ENCODE measurements at regions of chr11 and their contacts with region 1.

Region 1: DNA sequence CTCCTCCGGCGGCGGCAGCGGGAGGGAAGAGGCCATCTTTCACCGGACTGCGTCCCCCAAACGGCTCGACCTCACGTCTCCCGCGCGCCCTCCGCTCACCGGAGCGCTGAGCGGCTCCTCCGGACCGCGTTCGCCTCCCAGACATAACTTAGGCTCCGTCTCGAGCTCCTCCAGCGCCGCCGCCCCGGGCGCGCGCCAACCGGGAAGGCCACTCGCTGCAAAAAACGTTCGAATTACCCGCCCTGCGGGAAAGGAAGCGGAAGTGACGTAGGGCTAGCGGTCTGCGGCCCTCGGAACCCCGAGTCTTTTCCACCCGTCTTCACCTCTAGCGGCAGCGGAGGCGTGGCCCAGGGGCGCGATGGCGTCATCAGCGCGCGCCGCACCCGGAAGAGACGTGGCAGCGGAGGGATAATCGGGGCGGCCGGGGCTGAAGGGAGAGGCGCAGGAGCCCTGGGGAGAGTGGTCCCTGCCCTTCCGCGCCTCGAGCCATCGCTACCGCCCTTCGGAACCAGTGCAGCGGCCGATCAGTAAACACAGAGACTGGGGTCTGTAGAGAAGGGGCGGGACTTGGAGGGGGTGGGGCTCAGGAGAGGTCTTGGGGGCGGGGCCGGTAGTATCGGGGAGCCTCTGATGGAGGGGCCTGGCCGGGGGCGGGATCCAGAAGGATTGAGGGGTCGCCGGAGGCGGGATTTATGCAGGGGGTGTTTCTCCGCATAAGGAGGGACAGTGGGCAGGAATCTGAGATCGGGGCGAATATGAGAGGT is at the starts of genes CDCA5 and ZFPL1:
- DNase-seq: peak; percentile 96
- H3K4me3 Mint-ChIP-seq: peak within 1 kb of the TSS; percentile 98
- H3K27ac Mint-ChIP-seq: peak within 1 kb of the TSS; percentile 97
- H3K4me1 Mint-ChIP-seq: peaks cover 59% of the 10 kb centered on the region
- H3K27me3 Mint-ChIP-seq: no peaks in the 10 kb centered on the region
- total RNA-seq, gene CDCA5: 91.8 and 92.5 TPM in 2 replicates
- total RNA-seq, gene ZFPL1: 31.9 and 34.5 TPM in 2 replicates

Region 2: GRCh38 chr11:64817476-64817875 is 266.5 kb before region 1 on chr11:
- intact Hi-C with region 1: no loop called
- DNase-seq: no peak
- H3K4me3 Mint-ChIP-seq: no peak overlapping the region
- H3K27ac Mint-ChIP-seq: no peak overlapping the region
- H3K4me1 Mint-ChIP-seq: no peaks in the 10 kb centered on the region
- H3K27me3 Mint-ChIP-seq: peaks cover 6% of the 10 kb centered on the region

Region 3: GRCh38 chr11:64878494-64879243 is 205.3 kb before region 1 on chr11 and contains the start of gene EHD1:
- intact Hi-C with region 1: loop called (anchors 1 kb)
- DNase-seq: peak; percentile 99
- H3K4me3 Mint-ChIP-seq: peak within 1 kb of the TSS; percentile 99
- H3K27ac Mint-ChIP-seq: peak within 1 kb of the TSS; percentile 83
- H3K4me1 Mint-ChIP-seq: peaks cover 64% of the 10 kb centered on the region
- H3K27me3 Mint-ChIP-seq: no peaks in the 10 kb centered on the region
- total RNA-seq, gene EHD1: 88.0 and 96.9 TPM in 2 replicates

Region 4: GRCh38 chr11:65027213-65028067 is 56.6 kb before region 1 on chr11 and contains the start of gene SNX15:
- intact Hi-C with region 1: loop called (anchors 1 kb)
- DNase-seq: peak; percentile 91
- H3K4me3 Mint-ChIP-seq: peak within 1 kb of the TSS; percentile 83
- H3K27ac Mint-ChIP-seq: peak within 1 kb of the TSS; percentile 83
- H3K4me1 Mint-ChIP-seq: peaks cover 23% of the 10 kb centered on the region
- H3K27me3 Mint-ChIP-seq: no peaks in the 10 kb centered on the region
- total RNA-seq, gene SNX15: 19.9 and 30.9 TPM in 2 replicates

Region 5: DNA sequence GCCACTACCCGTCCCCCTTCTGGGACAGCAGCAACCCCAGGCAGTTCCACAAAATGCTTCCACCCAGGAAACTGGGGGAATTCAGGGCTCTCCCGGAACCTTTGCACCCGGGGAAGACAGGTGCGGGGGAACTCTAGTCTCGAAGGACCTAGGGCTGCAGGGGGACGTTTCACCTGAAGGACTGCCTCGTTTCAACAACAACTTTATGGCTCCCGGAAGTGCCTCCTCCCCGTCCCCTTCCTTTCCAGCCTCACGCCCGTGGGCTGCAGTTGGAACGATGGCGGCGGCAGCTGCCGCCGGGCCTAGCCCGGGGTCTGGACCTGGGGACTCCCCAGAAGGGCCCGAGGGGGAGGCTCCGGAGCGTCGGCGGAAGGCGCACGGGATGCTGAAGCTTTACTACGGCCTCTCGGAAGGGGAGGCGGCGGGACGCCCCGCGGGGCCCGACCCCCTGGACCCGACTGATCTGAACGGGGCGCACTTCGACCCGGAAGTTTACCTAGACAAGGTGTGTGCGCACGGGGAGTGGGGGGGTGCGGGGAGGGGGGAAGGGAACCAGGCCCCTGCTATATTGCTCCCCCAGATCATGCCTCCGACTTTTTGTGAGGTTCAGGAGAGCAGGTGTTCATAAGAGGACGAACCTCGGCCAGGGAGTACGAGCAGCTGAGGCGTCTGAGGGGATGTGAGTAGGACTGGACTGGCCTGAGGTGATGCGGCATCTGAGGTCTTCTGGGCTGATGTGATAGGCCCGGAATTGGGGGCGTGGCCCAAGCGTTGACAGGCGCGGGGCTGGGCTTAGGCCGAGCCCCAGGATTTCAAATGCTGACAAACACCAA is 12.2 kb after region 1 on chr11 and contains the start of gene VPS51:
- intact Hi-C with region 1: loop called (anchors 1 kb)
- DNase-seq: peak; percentile 80
- H3K4me3 Mint-ChIP-seq: peak within 1 kb of the TSS; percentile 91
- H3K27ac Mint-ChIP-seq: peak within 1 kb of the TSS; percentile 94
- H3K4me1 Mint-ChIP-seq: peaks cover 11% of the 10 kb centered on the region
- H3K27me3 Mint-ChIP-seq: no peaks in the 10 kb centered on the region
- total RNA-seq, gene VPS51: 137 and 139 TPM in 2 replicates

Region 6: GRCh38 chr11:65134386-65135253 is 50.6 kb after region 1 on chr11 and contains the start of gene SYVN1:
- intact Hi-C with region 1: loop called (anchors 1 kb)
- DNase-seq: peak; percentile 91
- H3K4me3 Mint-ChIP-seq: peak within 1 kb of the TSS; percentile 97
- H3K27ac Mint-ChIP-seq: peak within 1 kb of the TSS; percentile 97
- H3K4me1 Mint-ChIP-seq: peaks cover 32% of the 10 kb centered on the region
- H3K27me3 Mint-ChIP-seq: no peaks in the 10 kb centered on the region
- total RNA-seq, gene SYVN1: 42.3 and 45.8 TPM in 2 replicates

Measured in activated T-helper 1 cell treated with anti-CD3 and anti-CD28 coated beads, Interleukin-12 subunit alpha, Interleukin-12 subunit beta, Interleukin-2, Interleukin-4 antibody, amounts not matched to agents 30 ng/mL and 10 ng/mL and 1 ng/mL, durations not matched to agents 14 hours and 24 hours and 36 hours (primary cell).